ENCODE measurements at regions of chr12 and their contacts with region 1.

Region 1: DNA sequence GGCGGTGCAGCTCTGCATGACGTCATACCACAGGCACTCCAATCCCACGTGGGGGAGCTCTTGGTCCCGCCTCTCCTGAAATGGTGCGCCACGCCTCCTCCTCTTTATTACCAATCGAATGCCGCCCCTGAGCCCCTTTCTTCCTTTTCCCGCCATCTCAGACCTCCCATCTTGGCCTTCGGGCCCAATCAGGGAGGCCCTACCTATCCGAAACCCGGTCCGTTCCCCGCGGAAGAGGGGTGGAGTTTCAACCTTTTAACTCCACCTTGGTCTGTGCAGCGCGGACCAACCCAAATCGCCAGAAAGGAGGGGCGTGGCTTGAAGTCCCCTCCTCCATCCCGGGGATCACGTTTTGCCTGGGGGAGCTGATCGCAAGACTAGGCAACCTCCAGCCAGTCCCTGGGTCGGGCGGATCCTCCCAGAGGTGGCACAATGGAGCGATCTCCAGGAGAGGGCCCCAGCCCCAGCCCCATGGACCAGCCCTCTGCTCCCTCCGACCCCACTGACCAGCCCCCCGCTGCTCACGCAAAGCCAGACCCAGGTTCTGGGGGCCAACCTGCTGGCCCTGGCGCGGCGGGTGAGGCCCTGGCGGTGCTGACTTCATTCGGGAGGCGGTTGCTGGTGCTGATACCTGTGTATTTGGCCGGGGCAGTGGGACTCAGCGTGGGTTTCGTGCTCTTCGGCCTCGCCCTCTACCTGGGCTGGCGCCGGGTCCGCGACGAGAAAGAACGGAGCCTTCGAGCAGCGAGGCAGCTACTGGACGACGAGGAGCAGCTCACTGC is at the start of gene ESYT1:
- DNase-seq: peak; percentile 99
- H3K4me3 ChIP-seq: peak within 1 kb of the TSS; percentile 90
- H3K27me3 ChIP-seq: no peaks in the 10 kb centered on the region
- CTCF ChIP-seq: 0 out of 2 replicates have a peak, but pooled peaks have one; percentile 20
- polyA plus RNA-seq, gene ESYT1: 180 and 264 TPM in 2 replicates

Region 2: DNA sequence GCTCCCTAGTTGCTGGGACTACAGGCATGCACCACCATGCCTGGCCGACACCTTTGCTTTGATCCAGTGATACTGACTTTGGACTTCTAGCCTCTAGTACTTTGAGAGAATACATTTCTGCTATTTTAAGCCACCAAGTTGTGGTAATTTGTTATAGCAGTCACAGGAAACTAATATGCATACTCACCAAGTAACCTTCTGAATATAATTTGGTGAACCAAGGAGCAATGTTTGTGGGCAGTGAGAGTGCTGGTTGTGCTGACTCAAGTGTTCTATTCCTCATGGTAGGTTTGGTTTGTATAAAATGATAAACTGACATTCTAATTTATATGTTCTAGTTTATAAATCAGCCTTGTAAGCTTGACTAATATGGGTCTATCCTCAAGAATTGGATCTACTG is 243.0 kb before region 1 on chr12:
- CTCF ChIA-PET with region 1: no interaction called
- POLR2A ChIA-PET with region 1: no interaction called
- DNase-seq: no peak
- H3K4me3 ChIP-seq: no peak overlapping the region
- H3K27me3 ChIP-seq: no peaks in the 10 kb centered on the region
- CTCF ChIP-seq: no peak

Region 3: GRCh38 chr12:56037161-56037560 is 90.9 kb before region 1 on chr12:
- CTCF ChIA-PET with region 1: no interaction called
- POLR2A ChIA-PET with region 1: no interaction called
- DNase-seq: no peak
- H3K4me3 ChIP-seq: no peak overlapping the region
- H3K27me3 ChIP-seq: no peaks in the 10 kb centered on the region
- CTCF ChIP-seq: no peak

Region 4: DNA sequence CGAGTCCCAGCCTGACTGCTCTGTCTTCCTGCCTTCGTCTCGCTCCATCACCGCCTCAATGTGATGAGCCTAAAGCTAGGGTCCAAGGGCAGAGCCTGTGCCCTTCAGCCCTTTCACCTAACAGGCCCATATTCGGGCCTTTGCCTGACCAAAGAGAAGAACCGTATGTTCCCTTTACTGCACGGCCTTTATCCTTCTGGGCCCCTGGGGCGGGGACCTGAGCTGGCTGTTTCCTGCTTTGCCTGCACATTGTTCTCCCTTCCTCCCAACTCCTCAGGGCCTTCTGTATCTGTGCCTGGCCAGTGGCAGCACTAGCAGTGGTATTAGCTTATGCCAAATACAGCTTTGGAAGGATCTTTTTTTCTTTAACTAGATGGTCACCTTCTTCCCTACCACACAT is 15.8 kb after region 1 on chr12:
- CTCF ChIA-PET with region 1: interaction called, 21 read pairs
- POLR2A ChIA-PET with region 1: no interaction called
- DNase-seq: no peak
- H3K4me3 ChIP-seq: no peak overlapping the region
- H3K27me3 ChIP-seq: no peaks in the 10 kb centered on the region
- CTCF ChIP-seq: no peak

Region 5: GRCh38 chr12:56158029-56158925 is 30.2 kb after region 1 on chr12 and contains the start of gene MYL6:
- CTCF ChIA-PET with region 1: interaction called, 12 read pairs
- POLR2A ChIA-PET with region 1: interaction called, 4 read pairs
- DNase-seq: peak; percentile 85
- H3K4me3 ChIP-seq: peak within 1 kb of the TSS; percentile 64
- H3K27me3 ChIP-seq: no peaks in the 10 kb centered on the region
- CTCF ChIP-seq: no peak
- polyA plus RNA-seq, gene MYL6: 5,667 and 6,879 TPM in 2 replicates

Region 6: GRCh38 chr12:56346703-56347102 is 218.6 kb after region 1 on chr12:
- CTCF ChIA-PET with region 1: no interaction called
- POLR2A ChIA-PET with region 1: interaction called, 11 read pairs
- DNase-seq: no peak
- H3K4me3 ChIP-seq: no peak overlapping the region
- H3K27me3 ChIP-seq: no peaks in the 10 kb centered on the region
- CTCF ChIP-seq: no peak

Region 7: DNA sequence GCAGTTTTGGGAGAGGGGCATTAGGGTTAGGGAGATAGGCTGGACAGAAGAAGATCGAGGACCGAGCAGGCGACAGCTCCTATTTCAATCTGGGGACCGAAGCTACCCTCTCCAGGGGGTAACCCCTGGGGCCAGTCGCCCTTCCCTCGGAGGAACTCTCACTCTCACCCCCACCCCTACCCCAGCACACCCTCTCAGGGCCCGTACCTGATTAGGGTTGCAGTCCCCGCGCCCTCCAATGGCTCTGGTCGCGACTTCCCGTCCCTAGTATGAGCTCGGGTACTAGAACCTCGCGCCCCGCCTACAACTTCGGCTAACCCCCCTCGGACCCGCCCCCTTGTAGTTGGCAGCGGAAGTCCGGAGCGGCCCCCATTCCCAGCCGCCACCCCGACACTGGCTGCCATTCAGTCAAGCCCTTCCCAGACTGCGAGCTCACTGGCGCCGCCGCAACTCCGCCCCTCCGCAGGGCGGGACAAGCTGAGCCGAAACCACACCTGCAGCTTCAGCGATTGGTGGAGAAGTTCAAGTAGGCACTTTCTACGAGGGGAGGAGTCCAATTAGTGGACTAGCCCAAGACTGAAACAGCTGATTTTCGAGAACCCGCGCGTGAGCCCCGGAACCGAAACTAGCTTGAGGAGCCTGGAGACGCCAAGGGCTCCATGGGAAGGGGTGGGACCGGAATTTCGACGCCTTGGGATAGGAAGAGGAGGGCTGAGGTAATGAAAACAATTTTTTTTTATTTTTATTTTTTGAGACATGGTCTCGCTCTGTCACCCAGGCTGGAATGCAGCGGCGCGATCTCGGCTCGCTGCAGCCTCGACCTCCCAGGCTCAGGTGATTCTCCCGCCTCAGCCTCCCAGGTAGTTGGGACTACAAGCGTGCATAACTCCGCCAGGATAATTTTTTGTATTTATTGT is 232.0 kb after region 1 on chr12 and contains the start of gene STAT2:
- CTCF ChIA-PET with region 1: no interaction called
- POLR2A ChIA-PET with region 1: no interaction called
- DNase-seq: peak; percentile 100
- H3K4me3 ChIP-seq: peak within 1 kb of the TSS; percentile 67
- H3K27me3 ChIP-seq: no peaks in the 10 kb centered on the region
- CTCF ChIP-seq: no peak
- polyA plus RNA-seq, gene STAT2: 154 TPM in 2 replicates

Region 8: GRCh38 chr12:56391721-56392120 is 263.6 kb after region 1 on chr12:
- CTCF ChIA-PET with region 1: no interaction called
- POLR2A ChIA-PET with region 1: no interaction called
- DNase-seq: no peak
- H3K4me3 ChIP-seq: no peak overlapping the region
- H3K27me3 ChIP-seq: no peaks in the 10 kb centered on the region
- CTCF ChIP-seq: no peak

Measured in BJ (cell line).